Tibial artery (tissue), 4 donors: ENCODE measurements at regions of chr6 and their contacts with region 1.

Region 1: DNA sequence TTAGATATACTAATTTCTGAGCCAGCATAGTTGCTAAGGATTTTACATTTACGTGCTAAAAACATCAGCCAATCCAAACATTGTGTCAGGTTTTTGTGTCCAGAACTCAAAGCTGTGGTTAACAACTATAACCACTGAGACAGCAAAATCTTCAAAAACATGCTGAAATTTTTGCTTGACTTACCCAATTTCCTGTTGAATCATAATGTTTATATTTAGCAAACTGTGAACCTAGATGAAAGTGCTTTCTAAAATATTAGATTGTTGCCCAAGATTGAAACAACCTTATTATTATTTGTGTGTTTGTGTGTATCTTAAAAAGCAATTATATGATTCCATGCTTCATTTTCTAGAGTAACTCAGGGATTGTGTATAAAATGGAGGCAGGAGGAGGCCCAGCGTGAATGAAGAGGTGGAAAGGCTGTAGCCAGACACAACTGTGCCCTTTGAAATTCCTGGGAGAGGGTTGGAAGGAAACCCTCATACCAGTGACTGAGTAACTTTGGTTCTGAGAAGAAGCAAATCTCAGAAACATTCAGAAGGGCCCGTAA is 48.0 kb downstream of the ARMC2 start:
- DNase-seq: no peak
- H3K4me3 ChIP-seq: no peak overlapping the region
- H3K27ac ChIP-seq: peak overlapping the region; percentile 65 to 66
- H3K4me1 ChIP-seq: peaks cover 4 to 38% (median 15%) of the 10 kb centered on the region in 4 donors
- H3K27me3 ChIP-seq: no peaks in the 10 kb centered on the region
- CTCF ChIP-seq: no peak

Region 2: DNA sequence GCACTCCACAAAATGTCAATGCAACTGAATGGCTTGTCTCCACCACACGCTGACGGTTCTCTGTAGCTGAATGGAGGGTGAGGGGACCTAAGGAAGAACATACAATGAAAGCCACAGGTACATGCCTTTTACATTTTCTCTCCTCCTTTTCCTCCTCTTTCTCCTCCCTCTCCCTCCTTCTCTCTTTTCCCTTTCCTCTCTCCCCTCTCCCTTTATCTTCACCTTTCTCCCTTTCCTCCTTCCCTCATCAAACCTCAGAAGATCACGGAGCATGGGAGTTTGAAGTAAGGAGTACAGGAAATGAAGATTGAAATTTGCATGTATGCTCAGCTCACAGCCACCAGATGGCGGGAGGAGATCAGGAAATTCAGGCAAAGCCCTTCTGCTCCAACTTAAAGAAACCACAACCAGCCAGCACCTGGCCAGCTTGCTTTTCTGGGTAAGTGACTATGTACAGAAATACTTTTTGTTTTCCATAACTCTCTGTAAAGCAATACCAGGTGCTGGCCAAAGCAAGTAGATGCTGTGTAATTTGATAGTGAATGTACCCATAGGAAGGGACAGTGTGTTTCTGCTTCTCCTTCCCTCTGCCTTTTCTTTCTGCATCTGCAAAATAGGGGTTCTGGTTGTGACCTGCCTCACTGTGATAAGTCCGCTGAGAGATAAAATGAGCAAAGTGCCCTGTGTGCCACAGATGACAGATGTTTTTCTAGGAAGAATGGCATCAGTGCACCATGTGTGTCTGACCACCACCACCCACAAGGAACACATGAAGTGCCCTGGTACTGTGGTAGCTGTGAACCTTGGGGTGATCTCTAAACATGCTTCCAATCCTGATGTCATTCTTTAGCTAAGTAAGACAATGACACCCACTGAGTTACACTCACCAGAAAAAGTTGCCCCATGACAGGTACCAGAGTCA is 354.1 kb before region 1 on chr6:
- intact Hi-C with region 1: loop called (anchors 5 kb)
- DNase-seq: peak; percentile 64 to 75
- H3K4me3 ChIP-seq: no peak overlapping the region
- H3K27ac ChIP-seq: no peak overlapping the region
- H3K4me1 ChIP-seq: peaks cover 0 to 7% (median 3%) of the 10 kb centered on the region in 4 donors
- H3K27me3 ChIP-seq: peaks cover 0 to 3% of the 10 kb centered on the region in 2 donors
- CTCF ChIP-seq: peak; percentile 74 to 96

Region 3: GRCh38 chr6:108782179-108783041 is 113.8 kb before region 1 on chr6:
- intact Hi-C with region 1: loop called (anchors 10 kb)
- DNase-seq: peak; percentile 80 to 89
- H3K4me3 ChIP-seq: peak overlapping the region; percentile 49
- H3K27ac ChIP-seq: peak overlapping the region; percentile 5 to 57
- H3K4me1 ChIP-seq: peaks cover 0 to 15% (median 8%) of the 10 kb centered on the region in 4 donors
- H3K27me3 ChIP-seq: no peaks in the 10 kb centered on the region
- CTCF ChIP-seq: peak; percentile 75 to 79

Region 4: DNA sequence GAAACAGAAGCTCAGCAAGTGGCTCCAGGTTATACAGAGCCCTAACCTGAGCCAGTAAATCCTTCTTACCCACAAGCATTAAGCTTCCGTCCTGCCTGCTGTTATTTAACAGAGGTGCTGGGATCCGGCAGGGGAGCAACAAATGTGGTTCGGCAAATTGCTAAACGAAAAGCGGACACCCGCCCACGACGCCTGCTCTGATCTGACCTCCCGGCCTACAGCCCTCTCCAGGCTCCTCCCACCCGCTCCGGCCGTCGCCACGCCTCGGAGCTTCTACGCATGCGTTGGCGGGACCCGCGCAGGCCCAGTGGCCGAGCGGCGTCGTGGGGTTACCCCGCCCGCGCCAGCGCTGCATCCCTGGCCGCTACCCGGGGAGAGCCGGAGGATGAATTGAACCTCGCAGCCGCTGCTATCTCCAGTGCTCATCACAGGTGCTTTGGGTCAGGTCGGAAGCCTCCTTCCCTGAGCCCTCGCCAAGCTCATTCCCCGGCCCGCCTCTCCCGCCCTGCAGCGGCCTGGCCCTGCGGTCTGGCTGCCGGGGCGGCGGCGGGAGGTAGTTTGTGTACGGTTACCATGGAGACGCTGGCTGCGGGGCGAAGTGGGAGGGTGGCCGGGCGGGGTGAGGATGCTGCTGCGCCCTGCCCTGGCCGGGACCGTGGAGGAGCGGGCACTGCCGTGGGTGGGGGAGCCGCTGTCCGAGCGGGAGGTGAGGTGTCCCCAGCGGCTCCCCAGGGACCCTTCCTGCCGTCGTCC is 47.9 kb before region 1 on chr6 and contains the start of gene ARMC2:
- intact Hi-C with region 1: loop called (anchors 5 kb)
- DNase-seq: peak; percentile 86 to 95
- H3K4me3 ChIP-seq: peak within 1 kb of the TSS; percentile 66 to 78
- H3K27ac ChIP-seq: peak within 1 kb of the TSS; percentile 68 to 84
- H3K4me1 ChIP-seq: peaks cover 7 to 39% (median 22%) of the 10 kb centered on the region in 4 donors
- H3K27me3 ChIP-seq: no peaks in the 10 kb centered on the region
- CTCF ChIP-seq: no peak

Region 5: GRCh38 chr6:108927927-108928326 is 31.7 kb after region 1 on chr6:
- intact Hi-C with region 1: no loop called
- DNase-seq: no peak
- H3K4me3 ChIP-seq: no peak overlapping the region
- H3K27ac ChIP-seq: no peak overlapping the region
- H3K4me1 ChIP-seq: no peaks in the 10 kb centered on the region
- H3K27me3 ChIP-seq: no peaks in the 10 kb centered on the region
- CTCF ChIP-seq: no peak

Region 6: GRCh38 chr6:108947114-108947854 is 51.1 kb after region 1 on chr6:
- intact Hi-C with region 1: no loop called
- DNase-seq: peak in 1 of 2 donors; percentile 66
- H3K4me3 ChIP-seq: peak overlapping the region in 1 of 2 donors; percentile 6
- H3K27ac ChIP-seq: peak overlapping the region; percentile 81 to 84
- H3K4me1 ChIP-seq: peaks cover 0 to 59% (median 45%) of the 10 kb centered on the region in 4 donors
- H3K27me3 ChIP-seq: no peaks in the 10 kb centered on the region
- CTCF ChIP-seq: no peak